WTC11 (cell line): ENCODE measurements at regions of chr14 and their contacts with region 1.

Region 1: DNA sequence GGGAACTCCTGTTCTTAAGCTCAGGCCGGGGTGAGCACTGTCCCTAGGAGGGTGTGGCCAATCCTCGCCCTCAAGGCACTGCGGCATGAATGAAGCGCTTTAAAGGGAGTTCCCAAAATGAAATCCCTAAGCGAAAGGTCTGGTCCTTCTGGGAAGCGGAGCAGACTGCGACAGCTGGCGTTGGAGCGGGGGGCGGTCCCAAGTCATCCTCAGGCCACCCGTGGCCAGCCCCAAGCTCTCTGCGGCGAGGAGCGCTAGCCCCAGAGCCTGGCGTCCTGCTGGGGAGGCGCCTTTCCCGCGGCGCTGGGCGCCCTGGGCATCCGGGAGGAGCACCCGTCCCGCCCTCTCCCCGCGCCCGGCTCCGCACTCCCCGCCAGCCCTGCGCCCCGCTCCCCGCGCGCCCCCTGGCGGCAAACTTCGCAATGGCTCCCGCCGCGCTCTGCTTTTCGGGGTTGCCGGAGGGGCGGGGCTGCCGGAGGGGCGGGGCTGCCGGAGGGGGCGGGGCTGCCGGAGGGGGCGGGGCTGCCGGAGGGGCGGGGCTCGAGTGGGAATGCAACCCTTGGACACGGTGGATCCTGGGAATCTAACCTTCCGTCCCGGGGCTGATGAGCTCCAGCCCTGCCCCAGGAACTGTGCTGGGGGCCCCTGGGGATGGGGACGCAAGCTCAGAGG is 25.4 kb downstream of the ZBTB42 start:
- DNase-seq: peak; percentile 93
- ATAC-seq: peak; percentile 54
- H3K4me3 Mint-ChIP-seq: peak overlapping the region; percentile 80
- H3K27ac Mint-ChIP-seq: no peak overlapping the region
- H3K4me1 Mint-ChIP-seq: peaks cover 11% of the 10 kb centered on the region; the same call in 1 of the 2 replicates
- H3K27me3 Mint-ChIP-seq: peaks cover 34% of the 10 kb centered on the region
- CTCF ChIP-seq: peak; percentile 85

Region 2: DNA sequence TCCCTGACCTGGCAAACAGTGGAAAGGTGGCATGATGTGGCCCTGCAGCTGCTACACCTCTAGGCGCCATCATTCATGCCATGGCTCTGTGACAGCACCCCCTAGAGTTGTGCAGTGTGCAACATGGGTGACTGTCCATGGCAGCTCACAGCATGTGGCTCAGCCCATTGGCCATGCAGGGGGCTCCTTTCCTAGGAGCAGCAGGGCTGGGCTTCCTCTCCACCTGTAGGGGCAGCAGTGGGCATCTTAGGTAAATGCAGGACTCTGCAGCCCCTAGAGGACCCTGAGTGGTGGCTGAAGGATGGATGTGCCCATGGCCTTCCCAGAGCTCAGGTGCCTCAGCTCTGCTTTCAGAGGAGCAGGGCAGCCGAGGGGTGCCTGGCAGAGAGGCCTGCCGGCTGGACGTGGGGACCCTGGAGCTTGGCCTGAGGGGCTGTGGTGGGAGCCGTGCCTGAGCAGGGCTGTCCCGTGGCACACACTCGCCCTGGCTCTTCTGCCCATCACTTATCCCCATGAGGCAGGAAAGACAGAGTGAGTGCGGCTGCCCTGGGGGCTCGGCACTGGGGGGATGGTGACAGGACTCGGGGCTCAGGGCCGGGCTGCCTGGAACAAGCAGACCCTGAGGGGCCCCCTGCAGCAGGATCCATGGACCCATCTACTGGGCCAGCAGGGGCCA is 94.9 kb before region 1 on chr14:
- CTCF ChIA-PET with region 1: interaction called, 11 read pairs
- POLR2A ChIA-PET with region 1: no interaction called
- DNase-seq: peak; percentile 54
- ATAC-seq: peak; percentile 89
- H3K4me3 Mint-ChIP-seq: no peak overlapping the region
- H3K27ac Mint-ChIP-seq: no peak overlapping the region; the same call in 1 of the 2 replicates
- H3K4me1 Mint-ChIP-seq: no peaks in the 10 kb centered on the region
- H3K27me3 Mint-ChIP-seq: peaks cover 3% of the 10 kb centered on the region; the same call in 1 of the 2 replicates
- CTCF ChIP-seq: peak; percentile 41; the same call in 1 of the 2 replicates

Region 3: DNA sequence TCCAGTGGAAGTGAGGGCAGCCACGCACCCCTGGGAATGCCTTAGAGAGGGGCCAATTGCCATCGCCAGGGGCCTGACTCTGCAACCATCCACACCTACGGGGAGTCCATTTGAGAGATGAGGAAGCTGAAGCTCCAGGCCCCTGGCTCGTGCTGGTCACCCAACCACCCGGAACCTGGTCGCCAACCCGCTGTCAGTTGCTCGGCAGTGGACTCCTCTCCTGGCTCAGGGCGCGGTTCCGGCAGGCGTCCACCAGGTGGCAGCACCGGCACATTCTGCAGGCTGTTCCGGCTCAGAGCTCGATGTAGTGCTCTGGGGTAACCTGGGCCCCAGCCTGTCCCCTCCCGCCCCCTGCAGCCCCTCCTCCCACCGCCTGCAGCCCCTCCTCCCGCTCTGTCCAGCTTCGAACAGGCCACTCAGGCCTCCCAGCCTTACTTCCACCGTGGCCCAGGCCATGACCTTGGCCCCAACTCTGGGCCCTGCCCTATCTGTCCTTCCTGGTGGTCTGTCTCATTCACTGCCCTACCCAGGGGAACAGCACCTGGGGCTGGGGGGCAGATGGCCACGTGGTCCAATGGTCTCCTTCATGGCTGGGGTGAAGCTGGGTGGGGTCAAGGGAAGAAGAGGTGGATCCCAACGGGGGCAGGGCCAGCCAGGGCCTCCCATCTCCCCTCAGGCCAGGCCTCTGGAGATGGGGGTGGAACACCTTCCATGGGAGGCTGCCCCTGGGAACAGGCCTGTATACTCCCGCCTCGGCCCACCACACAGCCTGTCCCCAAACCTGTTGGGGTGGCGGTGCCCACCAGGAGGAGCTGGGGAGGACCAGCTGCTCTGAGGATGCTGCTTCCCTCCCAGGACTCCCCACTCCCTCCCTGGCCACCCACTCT is 57.6 kb before region 1 on chr14:
- CTCF ChIA-PET with region 1: interaction called, 164 read pairs
- POLR2A ChIA-PET with region 1: interaction called, 6 read pairs
- DNase-seq: peak; percentile 99
- ATAC-seq: peak; percentile 86
- H3K4me3 Mint-ChIP-seq: peak overlapping the region; percentile 56
- H3K27ac Mint-ChIP-seq: peak overlapping the region; percentile 81
- H3K4me1 Mint-ChIP-seq: peaks cover 17% of the 10 kb centered on the region
- H3K27me3 Mint-ChIP-seq: no peaks in the 10 kb centered on the region; the same call in 1 of the 2 replicates
- CTCF ChIP-seq: peak; percentile 90

Region 4: DNA sequence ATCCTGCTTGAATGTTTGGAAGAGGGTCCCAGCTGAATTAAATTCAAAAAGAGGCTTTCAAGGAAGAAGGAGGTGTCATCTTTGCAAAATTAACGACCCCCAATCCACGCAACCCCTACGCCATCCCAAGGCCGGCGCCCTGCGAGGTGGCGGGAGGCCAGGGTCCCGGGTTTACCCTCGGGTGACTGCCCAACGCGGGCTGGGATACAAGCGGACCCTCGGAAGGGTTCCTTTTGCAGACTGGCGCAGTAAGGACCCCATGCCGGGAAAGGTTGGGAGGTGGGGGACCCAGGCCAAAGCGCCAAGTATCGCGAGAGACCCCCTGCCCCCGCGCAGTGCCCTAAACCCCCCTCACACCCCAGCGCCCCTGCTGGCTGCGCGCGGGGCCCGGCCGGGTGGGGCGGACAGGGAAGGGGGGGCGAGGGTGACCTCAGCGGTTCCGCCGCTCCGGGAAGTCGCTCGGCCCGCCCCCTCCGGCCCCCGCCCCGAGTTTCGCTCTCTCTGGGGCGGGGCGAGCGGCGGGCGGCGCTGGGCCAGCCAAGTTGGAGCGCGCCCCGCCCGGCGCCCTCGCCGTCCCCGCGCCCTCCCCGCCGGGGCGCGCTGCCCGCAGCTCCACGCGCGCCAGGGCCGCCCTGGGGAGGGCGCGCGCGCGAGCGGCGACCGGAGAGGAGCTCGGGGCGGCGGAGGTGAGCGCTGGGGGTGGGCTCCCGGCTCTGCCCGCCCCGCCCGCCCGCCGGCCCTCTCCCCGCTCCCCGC is 26.1 kb before region 1 on chr14:
- CTCF ChIA-PET with region 1: interaction called, 15 read pairs
- POLR2A ChIA-PET with region 1: no interaction called
- DNase-seq: peak; percentile 70
- ATAC-seq: peak; percentile 21
- H3K4me3 Mint-ChIP-seq: peak overlapping the region; percentile 88
- H3K27ac Mint-ChIP-seq: peak overlapping the region; percentile 93
- H3K4me1 Mint-ChIP-seq: peaks cover 32% of the 10 kb centered on the region
- H3K27me3 Mint-ChIP-seq: peaks cover 65% of the 10 kb centered on the region
- CTCF ChIP-seq: no peak

Region 5: GRCh38 chr14:104865644-104866441 is 39.5 kb after region 1 on chr14:
- CTCF ChIA-PET with region 1: interaction called, 43 read pairs
- POLR2A ChIA-PET with region 1: no interaction called
- DNase-seq: peak; percentile 74
- ATAC-seq: peak; percentile 50
- H3K4me3 Mint-ChIP-seq: peak overlapping the region; percentile 70
- H3K27ac Mint-ChIP-seq: no peak overlapping the region
- H3K4me1 Mint-ChIP-seq: peaks cover 18% of the 10 kb centered on the region
- H3K27me3 Mint-ChIP-seq: no peaks in the 10 kb centered on the region
- CTCF ChIP-seq: no peak

Region 6: DNA sequence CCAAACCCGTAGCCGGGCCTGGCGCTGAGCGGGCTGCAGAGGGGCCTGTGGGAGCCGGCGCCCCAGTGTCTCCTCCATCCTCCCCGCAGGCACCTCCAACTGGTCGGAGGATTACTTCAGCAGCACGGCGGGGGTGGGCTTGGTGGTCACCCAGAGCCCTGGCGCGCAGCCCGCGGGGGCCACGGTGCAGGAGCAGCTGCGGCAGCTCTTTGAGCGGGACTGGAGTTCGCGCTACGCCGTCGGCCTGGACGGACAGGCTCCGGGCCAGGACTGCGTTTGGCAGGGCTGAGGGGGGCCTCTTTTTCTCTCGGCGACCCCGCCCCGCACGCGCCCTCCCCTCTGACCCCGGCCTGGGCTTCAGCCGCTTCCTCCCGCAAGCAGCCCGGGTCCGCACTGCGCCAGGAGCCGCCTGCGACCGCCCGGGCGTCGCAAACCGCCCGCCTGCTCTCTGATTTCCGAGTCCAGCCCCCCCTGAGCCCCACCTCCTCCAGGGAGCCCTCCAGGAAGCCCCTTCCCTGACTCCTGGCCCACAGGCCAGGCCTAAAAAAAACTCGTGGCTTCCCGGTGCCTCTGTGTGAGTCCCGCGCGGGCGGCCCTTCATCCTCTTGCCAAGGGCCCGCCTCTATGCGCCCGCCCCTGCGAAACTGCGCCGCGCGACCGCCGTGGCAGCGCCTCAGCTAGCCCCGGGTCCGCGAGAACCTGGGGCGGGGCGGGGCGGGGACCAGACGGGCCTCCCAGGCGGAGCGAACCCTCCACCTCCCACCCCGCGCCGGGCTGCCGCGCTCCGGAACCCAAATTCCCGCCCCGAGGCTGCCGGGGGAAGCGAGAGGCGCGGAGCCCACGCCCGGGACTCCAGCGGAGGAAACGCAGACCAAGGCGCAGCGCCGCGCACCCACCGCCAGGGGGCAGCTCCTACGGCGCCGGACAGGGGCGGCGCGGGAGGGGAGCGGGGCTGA is 106.6 kb after region 1 on chr14:
- CTCF ChIA-PET with region 1: interaction called, 13 read pairs
- POLR2A ChIA-PET with region 1: no interaction called
- DNase-seq: peak; percentile 87
- ATAC-seq: peak; percentile 77
- H3K4me3 Mint-ChIP-seq: peak overlapping the region; percentile 62
- H3K27ac Mint-ChIP-seq: no peak overlapping the region
- H3K4me1 Mint-ChIP-seq: no peaks in the 10 kb centered on the region
- H3K27me3 Mint-ChIP-seq: peaks cover 74% of the 10 kb centered on the region
- CTCF ChIP-seq: peak; percentile 58